CD8-positive, alpha-beta T cell (primary cell): ENCODE measurements at regions of chrX and their contacts with region 1.

Region 1: DNA sequence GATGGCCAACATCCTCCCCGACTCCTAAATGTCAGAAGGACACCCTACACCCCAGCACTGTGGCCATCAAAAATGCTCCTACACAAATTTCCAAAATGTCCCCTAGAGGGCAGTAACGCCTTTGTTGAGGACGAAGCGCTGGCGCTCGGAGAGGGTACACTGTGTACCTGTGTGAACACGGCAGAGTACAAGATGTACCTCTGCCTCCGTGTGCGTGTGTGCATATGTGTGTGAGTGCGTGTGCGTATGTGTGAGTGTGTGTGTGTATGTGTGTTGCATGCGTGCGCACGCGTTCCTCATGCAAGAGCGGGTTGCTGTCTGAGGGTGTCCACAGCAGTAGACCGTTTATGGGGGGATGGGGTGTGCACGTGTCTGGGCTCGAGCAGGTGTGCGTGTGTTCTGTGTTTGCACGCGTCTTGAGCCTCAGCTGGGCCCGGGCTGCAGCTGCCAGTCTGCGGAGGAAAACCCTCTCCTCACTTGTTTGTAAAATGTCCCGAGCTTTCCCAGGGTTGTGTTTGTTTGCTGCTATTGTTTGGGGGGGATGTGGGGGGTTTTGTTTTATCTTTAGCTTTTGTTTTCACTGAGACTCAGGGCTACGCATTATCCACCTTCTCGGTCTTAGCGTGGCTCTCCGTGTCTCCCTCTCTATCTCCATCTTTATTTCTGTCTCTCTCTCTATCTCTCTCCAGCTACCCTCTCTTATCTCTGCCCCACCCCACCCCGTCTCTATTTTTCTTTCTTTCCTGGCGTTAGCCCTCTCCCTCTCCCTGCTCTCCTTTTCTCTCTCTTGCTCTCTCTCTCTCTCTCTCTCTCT is 10.4 kb upstream of the TSPYL2 start:
- DNase-seq: peak in 8 of 9 experiments; percentile 50 to 88 (median 74)
- ATAC-seq: peak; percentile 88
- H3K4me3 ChIP-seq: peak overlapping the region; percentile 48 to 56
- H3K4me3 Mint-ChIP-seq: peak overlapping the region; percentile 89
- H3K27ac ChIP-seq: peak overlapping the region; percentile 39 to 52
- H3K27ac Mint-ChIP-seq: peak overlapping the region; percentile 92
- H3K4me1 ChIP-seq: peaks cover 6% of the 10 kb centered on the region
- H3K4me1 Mint-ChIP-seq: peaks cover 14% of the 10 kb centered on the region
- H3K27me3 ChIP-seq: no peaks in the 10 kb centered on the region
- H3K27me3 Mint-ChIP-seq: no peaks in the 10 kb centered on the region
- CTCF ChIP-seq: peak; percentile 68

Region 2: GRCh38 chrX:53022381-53022780 is 49.4 kb before region 1 on chrX:
- CTCF ChIA-PET with region 1: no interaction called
- POLR2A ChIA-PET with region 1: no interaction called
- intact Hi-C with region 1: no loop called
- DNase-seq: no peak
- ATAC-seq: no peak
- H3K4me3 ChIP-seq: no peak overlapping the region
- H3K4me3 Mint-ChIP-seq: no peak overlapping the region
- H3K27ac ChIP-seq: no peak overlapping the region
- H3K27ac Mint-ChIP-seq: no peak overlapping the region
- H3K4me1 ChIP-seq: no peaks in the 10 kb centered on the region
- H3K4me1 Mint-ChIP-seq: no peaks in the 10 kb centered on the region
- H3K27me3 ChIP-seq: no peaks in the 10 kb centered on the region
- H3K27me3 Mint-ChIP-seq: no peaks in the 10 kb centered on the region
- CTCF ChIP-seq: no peak

Region 3: DNA sequence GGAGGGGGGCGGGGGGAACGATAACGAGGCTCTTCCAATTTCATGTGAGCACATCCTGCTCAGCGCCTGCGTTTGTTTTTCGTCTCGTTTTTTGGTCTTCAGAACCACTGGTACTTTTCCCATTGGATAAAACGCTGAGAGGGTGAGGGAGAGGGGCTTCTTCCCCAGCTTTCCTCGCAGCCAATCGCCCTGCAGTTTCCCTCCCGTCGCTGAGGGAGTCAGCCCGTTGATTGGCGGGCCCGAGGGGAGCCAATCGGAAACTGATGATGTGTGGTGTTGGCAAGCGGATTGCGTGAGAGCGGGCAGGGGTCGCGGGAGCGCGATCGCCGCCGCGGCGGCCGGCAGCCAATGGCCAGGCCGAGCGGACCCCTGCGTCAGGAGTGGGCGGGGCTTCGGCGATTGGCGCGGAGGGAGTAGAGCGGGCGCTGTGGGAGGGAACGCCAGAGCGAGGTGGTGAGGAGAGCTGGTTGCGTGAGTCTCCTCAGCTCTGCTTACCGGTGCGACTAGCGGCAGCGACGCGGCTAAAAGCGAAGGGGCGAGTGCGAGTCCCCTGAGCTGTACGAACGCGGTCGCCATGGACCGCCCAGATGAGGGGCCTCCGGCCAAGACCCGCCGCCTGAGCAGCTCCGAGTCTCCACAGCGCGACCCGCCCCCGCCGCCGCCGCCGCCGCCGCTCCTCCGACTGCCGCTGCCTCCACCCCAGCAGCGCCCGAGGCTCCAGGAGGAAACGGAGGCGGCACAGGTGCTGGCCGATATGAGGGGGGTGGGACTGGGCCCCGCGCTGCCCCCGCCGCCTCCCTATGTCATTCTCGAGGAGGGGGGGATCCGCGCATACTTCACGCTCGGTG is 10.3 kb after region 1 on chrX and contains the start of gene TSPYL2:
- CTCF ChIA-PET with region 1: interaction called, 6 read pairs
- POLR2A ChIA-PET with region 1: interaction called, 42 read pairs
- intact Hi-C with region 1: loop called in 1 of 2 experiments (anchors 1 kb)
- DNase-seq: peak; percentile 85 to 96 (median 93)
- ATAC-seq: peak; percentile 77
- H3K4me3 ChIP-seq: peak within 1 kb of the TSS; percentile 68 to 75
- H3K4me3 Mint-ChIP-seq: peak within 1 kb of the TSS; percentile 88
- H3K27ac ChIP-seq: peak within 1 kb of the TSS; percentile 77 to 87
- H3K27ac Mint-ChIP-seq: peak within 1 kb of the TSS; percentile 95
- H3K4me1 ChIP-seq: peaks cover 27% of the 10 kb centered on the region
- H3K4me1 Mint-ChIP-seq: peaks cover 49% of the 10 kb centered on the region
- H3K27me3 ChIP-seq: no peaks in the 10 kb centered on the region
- H3K27me3 Mint-ChIP-seq: no peaks in the 10 kb centered on the region
- CTCF ChIP-seq: no peak
- total RNA-seq, gene TSPYL2: 978 to 1,030 TPM

Region 4: GRCh38 chrX:53088136-53088974 is 16.5 kb after region 1 on chrX:
- CTCF ChIA-PET with region 1: interaction called, 20 read pairs
- POLR2A ChIA-PET with region 1: interaction called, 42 read pairs
- intact Hi-C with region 1: loop called (anchors 1 kb)
- DNase-seq: peak; percentile 61 to 93 (median 81)
- ATAC-seq: peak; percentile 67
- H3K4me3 ChIP-seq: peak overlapping the region; percentile 44 to 52
- H3K4me3 Mint-ChIP-seq: peak overlapping the region; percentile 92
- H3K27ac ChIP-seq: peak overlapping the region; percentile 92 to 93
- H3K27ac Mint-ChIP-seq: peak overlapping the region; percentile 99
- H3K4me1 ChIP-seq: peaks cover 26% of the 10 kb centered on the region
- H3K4me1 Mint-ChIP-seq: peaks cover 59% of the 10 kb centered on the region
- H3K27me3 ChIP-seq: no peaks in the 10 kb centered on the region
- H3K27me3 Mint-ChIP-seq: no peaks in the 10 kb centered on the region
- CTCF ChIP-seq: no peak

Region 5: GRCh38 chrX:53433651-53434639 is 362.1 kb after region 1 on chrX and contains the start of gene HSD17B10:
- CTCF ChIA-PET with region 1: no interaction called
- POLR2A ChIA-PET with region 1: no interaction called
- intact Hi-C with region 1: loop called in 1 of 2 experiments (anchors 10 kb)
- DNase-seq: peak; percentile 59 to 91 (median 84)
- ATAC-seq: peak; percentile 97
- H3K4me3 ChIP-seq: peak within 1 kb of the TSS; percentile 55 to 74
- H3K4me3 Mint-ChIP-seq: peak within 1 kb of the TSS; percentile 97
- H3K27ac ChIP-seq: peak within 1 kb of the TSS; percentile 71 to 81
- H3K27ac Mint-ChIP-seq: peak within 1 kb of the TSS; percentile 97
- H3K4me1 ChIP-seq: peaks cover 10% of the 10 kb centered on the region
- H3K4me1 Mint-ChIP-seq: peaks cover 16% of the 10 kb centered on the region
- H3K27me3 ChIP-seq: no peaks in the 10 kb centered on the region
- H3K27me3 Mint-ChIP-seq: no peaks in the 10 kb centered on the region
- CTCF ChIP-seq: no peak
- total RNA-seq, gene HSD17B10: 23.4 to 26.2 TPM

Region 6: DNA sequence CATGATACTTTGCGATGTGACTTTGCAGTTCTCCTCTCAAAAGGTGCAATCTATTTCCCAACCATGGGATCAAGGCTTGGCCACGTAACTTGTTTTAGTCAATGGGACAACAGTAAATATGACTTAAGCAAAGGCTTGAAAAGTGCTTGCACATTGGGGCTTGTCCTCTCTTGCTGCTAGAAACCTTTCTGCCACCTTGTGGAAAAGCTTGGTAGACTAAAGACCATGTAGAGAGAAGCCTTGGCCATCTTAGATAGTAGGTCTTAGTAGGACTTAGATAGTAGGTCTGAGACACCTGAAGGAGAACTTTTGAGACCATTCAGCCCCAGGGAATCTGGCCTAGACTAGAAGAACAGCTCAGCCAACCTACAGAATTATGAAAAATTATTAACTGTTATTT is 890.0 kb after region 1 on chrX:
- CTCF ChIA-PET with region 1: no interaction called
- POLR2A ChIA-PET with region 1: no interaction called
- intact Hi-C with region 1: no loop called
- DNase-seq: no peak
- ATAC-seq: no peak
- H3K4me3 ChIP-seq: no peak overlapping the region
- H3K4me3 Mint-ChIP-seq: no peak overlapping the region
- H3K27ac ChIP-seq: no peak overlapping the region
- H3K27ac Mint-ChIP-seq: no peak overlapping the region
- H3K4me1 ChIP-seq: no peaks in the 10 kb centered on the region
- H3K4me1 Mint-ChIP-seq: peaks cover 2% of the 10 kb centered on the region
- H3K27me3 ChIP-seq: no peaks in the 10 kb centered on the region
- H3K27me3 Mint-ChIP-seq: no peaks in the 10 kb centered on the region
- CTCF ChIP-seq: no peak